ENCODE measurements at regions of chr11 and their contacts with region 1.

Region 1: DNA sequence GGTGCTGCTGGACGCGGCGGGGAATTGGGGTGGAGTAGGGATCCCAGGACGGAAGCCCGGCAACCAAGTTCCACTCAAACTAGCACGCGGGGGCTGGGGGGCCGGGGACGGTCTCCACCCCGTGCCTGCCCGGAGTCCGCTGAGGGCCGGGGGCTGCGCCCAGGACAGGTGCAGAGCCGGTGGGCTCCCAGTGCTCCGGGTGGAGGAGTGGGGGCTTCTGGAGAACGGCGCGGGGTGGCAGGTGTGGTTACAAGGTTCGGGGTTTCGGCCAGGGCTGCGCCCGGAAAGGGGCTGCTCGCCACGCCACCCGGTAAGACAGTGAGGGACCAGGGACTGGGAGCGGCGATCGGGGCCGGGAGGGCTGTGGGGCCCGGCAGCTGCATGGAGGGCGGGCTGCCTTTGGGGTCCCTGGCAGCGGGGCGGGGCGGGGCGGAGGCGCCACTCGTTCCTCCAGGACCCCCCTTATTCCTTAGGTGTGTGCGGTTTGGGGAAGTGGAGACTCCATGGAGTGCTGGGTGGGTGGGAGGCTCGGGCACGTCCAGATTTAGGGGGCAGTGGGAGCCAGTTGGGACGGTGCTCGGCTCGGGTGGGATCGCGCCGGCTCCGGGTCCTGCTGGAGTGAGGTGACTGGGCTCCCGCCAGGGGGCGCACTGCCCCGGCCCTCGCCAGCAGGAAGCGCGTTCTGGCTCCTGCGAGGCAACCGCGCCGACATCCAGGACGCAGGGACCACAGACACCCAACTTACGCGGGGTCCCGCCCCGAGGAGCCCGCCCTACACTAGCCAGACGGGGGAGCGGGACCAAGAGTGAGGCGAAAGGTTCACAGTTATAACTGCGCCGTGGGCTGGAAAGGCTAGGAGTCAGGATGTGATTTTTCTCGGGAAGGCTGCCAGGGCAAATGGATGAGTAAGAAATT is 868 bp downstream of the TSPAN18 start:
- ATAC-seq: peak; percentile 63 to 87 (median 83)
- H3K4me3 ChIP-seq: peak overlapping the region; percentile 56 to 84 (median 68)
- H3K27ac ChIP-seq: peak overlapping the region; percentile 13 to 51
- H3K4me1 ChIP-seq: peaks cover 33 to 44% of the 10 kb centered on the region in 2 donors

Region 2: GRCh38 chr11:44634401-44635281 is 93.0 kb before region 1 on chr11:
- in situ Hi-C with region 1: loop called in 1 of 9 experiments (anchors 10 kb)
- ATAC-seq: peak; percentile 81 to 97 (median 96)
- H3K4me3 ChIP-seq: no peak overlapping the region
- H3K27ac ChIP-seq: peak overlapping the region; percentile 11 to 52
- H3K4me1 ChIP-seq: peaks cover 14 to 15% of the 10 kb centered on the region in 2 donors

Region 3: DNA sequence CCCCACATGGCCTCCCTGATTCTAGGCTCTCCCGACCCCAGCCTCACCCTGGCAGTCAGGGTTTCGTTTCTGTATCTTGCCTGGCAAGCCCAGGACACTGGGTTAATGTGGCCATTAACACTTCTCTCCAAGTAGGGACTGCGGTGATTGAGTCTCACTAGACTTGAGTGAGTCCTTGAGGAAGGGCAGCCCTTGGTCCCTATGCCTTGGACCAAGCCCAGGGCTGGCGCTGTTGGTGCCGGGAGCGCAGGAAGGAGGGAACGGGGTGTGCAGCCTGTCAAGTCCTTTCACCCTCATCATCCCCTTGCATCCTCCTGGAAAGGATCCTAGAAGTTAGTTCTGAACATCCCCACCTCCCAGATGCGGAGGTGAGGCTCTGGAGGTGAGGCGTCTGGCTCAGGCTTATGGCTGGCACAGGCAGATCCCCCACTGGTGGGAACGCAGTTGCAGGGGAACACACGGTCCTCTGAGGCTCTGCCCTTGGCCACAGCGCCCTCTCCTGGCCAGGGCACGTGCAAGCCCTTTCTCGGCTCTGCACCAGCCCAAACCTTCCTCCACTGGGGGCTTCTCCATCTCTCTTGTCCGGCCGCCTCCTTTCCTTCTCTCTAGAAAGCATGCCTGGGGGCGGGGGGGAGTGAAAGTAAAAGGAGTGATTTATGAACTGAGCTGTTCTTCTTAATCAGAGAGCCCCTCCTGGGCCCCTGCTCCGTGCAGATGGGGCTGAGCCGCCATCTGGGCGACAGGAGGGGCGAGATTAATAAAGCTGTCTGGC is 166.4 kb after region 1 on chr11:
- in situ Hi-C with region 1: loop called in 2 of 9 experiments (anchors 25 kb)
- ATAC-seq: peak; percentile 72 to 98 (median 96)
- H3K4me3 ChIP-seq: no peak overlapping the region
- H3K27ac ChIP-seq: no peak overlapping the region
- H3K4me1 ChIP-seq: peaks cover 32 to 36% of the 10 kb centered on the region in 2 donors

Region 4: DNA sequence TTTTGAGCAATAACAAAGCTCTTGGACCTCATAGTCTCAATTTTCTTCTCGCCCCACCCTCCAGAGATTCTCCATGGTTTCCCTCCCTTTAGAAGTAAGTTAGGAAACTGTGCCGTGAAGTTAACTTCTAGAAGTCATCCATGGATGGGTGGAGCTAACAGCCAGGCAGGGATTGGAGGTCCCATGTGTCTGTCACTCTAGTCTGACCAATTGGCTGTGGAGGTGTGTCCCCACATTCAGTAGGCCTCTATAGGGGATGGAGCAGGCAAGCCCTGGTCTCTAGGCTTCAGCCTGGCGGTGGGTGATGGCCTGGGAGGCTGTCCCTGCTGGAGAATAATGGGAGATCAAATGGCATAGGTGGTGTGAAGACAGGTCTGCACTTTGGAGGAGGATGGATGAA is 172.3 kb after region 1 on chr11:
- in situ Hi-C with region 1: loop called in 4 of 9 experiments (anchors 10 to 25 kb)
- ATAC-seq: peak; percentile 64 to 89 (median 82)
- H3K4me3 ChIP-seq: no peak overlapping the region
- H3K27ac ChIP-seq: no peak overlapping the region
- H3K4me1 ChIP-seq: peaks cover 5 to 10% of the 10 kb centered on the region in 2 donors

Region 5: GRCh38 chr11:44911029-44911814 is 183.6 kb after region 1 on chr11:
- in situ Hi-C with region 1: loop called in 2 of 9 experiments (anchors 10 to 25 kb)
- ATAC-seq: peak; percentile 78 to 88 (median 84)
- H3K4me3 ChIP-seq: no peak overlapping the region
- H3K27ac ChIP-seq: peak overlapping the region; percentile 13 to 54
- H3K4me1 ChIP-seq: peaks cover 26 to 29% of the 10 kb centered on the region in 2 donors

Measured in motor neuron (in vitro differentiated cells).